AG04449 (cell line): ENCODE measurements at regions of chr19 and their contacts with region 1.

Region 1: DNA sequence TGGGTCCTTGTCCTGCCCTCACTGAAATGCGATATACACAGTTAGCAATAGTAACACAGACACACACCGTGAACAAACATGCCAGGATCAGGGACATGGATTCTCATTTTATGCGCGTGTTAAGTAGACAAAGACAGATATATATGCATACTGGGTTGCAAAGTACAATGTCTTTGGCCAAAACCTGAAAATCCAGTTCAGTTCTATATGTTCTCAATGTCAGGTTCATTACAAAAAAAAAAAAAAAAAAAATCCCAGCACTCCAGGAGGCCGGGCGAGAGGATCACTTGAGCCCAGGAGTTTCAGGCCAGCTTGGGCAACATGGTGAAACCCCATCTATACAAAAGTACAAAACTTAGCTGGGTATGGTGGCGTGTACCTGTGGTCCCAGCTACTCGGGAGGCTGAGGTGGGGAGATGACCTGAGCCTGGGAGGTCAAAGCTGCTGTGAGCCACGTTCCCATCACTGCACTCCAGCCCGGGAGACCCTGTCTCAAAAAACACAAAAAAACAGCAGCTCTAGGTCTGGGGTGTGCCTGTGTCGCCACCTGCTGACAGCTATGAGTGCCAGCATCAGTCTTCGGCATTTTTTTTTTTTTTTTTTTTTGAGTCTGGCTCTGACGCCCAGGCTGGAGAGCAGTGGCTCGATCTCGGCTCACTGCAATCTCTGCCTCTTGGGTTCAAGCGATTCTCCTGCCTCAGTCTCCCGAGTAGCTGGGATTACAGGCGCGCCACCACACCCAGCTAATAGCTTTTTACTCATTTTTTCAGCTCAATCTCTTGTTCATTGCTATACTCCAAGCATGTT is 10.3 kb downstream of the AP2S1 start:
- DNase-seq: peak; percentile 23
- H3K4me3 ChIP-seq: no peak overlapping the region
- CTCF ChIP-seq: peak; percentile 74

Region 2: DNA sequence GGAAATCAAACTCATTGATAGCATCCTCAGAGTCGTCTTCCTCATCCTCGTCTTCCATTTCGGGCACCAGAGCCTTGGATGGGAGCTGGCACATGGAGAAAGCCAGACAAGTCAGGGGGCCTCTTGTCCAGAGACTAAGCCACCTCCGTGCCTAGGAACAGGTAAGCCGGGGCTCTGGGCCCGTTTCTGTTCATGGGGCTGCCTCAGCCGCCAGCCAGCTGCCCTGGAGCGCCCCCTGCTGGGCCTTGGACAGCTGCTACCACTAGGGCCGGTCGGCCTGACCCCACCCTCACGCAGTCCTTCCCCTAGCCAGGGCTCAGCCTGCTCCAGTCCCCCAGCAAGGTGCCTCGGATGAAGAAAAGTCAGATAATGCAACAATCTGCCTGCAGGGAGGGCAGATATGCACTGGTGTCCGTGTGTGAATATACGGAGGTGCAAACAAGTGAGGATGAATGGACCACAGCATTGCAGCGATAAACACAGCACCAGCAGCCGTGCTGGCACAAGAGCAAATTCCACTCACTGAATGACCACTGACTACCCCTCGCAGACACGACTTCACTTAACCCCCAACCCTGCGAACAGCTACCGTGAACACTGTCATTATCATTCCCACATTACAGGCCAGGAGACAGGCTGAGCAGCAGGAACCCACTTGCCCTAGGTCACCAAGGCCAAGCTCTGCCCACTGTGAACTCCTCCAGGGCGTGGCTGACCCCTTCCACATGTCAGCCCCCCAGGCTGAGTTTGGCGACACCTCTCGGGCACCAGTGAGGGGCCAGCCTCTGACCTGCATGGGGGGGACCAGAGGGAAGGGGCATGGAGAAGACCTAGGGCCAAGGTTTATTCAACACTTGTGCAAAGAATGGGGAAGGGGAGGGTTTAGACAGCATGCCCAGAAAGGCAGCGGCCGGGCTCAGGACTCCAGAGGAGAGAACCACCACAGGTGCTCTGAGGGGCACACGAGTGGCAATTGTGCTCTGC is 111.4 kb before region 1 on chr19:
- CTCF ChIA-PET with region 1: interaction called, 14 read pairs
- POLR2A ChIA-PET with region 1: no interaction called
- DNase-seq: no peak
- H3K4me3 ChIP-seq: no peak overlapping the region
- CTCF ChIP-seq: peak; percentile 90

Region 3: GRCh38 chr19:46759817-46760333 is 80.5 kb before region 1 on chr19:
- CTCF ChIA-PET with region 1: interaction called, 278 read pairs
- POLR2A ChIA-PET with region 1: interaction called, 8 read pairs
- DNase-seq: peak; percentile 97
- H3K4me3 ChIP-seq: no peak overlapping the region
- CTCF ChIP-seq: no peak

Region 4: GRCh38 chr19:46776927-46777911 is 63.1 kb before region 1 on chr19:
- CTCF ChIA-PET with region 1: interaction called, 20 read pairs
- POLR2A ChIA-PET with region 1: interaction called, 6 read pairs
- DNase-seq: no peak
- H3K4me3 ChIP-seq: no peak overlapping the region
- CTCF ChIP-seq: no peak

Region 5: GRCh38 chr19:46828484-46828883 is 11.9 kb before region 1 on chr19:
- CTCF ChIA-PET with region 1: interaction called, 63 read pairs
- POLR2A ChIA-PET with region 1: interaction called, 7 read pairs
- DNase-seq: no peak
- H3K4me3 ChIP-seq: no peak overlapping the region
- CTCF ChIP-seq: no peak

Region 6: DNA sequence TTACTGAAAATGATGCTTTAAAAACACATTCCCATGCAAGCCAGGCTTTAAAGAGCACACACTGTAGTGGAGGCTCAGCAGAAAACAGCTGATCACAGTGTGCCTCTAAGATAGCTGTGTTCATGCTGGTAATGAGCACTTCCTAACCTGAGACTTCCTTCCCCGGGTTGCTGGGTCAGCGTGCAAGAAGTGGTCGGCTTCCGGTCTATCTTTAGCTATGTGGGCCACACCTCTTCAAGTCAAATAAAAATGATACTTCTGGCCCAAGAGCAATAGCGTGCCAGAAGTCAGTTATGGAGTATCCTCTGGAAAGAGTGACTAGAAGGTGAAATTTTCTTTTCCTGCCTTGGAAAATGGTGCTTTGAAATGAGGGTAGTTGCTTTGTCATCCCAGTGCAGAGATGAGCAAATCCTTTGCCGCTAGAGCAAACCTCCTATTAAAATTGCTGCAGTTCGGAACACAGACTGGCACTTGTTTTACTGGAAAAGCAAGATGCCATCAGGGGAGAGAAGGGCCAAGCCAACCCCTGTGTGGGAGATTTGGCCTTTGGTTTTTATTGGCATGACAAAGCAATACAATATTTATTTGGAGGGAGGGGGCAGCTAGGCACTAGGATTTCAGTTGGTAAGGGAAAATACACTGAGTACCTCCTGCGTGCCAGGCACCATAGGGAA is 84.7 kb after region 1 on chr19:
- CTCF ChIA-PET with region 1: no interaction called
- POLR2A ChIA-PET with region 1: no interaction called
- DNase-seq: no peak
- H3K4me3 ChIP-seq: no peak overlapping the region
- CTCF ChIP-seq: no peak

Region 7: GRCh38 chr19:46975925-46976782 is 135.8 kb after region 1 on chr19:
- CTCF ChIA-PET with region 1: interaction called, 18 read pairs
- POLR2A ChIA-PET with region 1: no interaction called
- DNase-seq: peak; percentile 96
- H3K4me3 ChIP-seq: no peak overlapping the region
- CTCF ChIP-seq: no peak